ENCODE measurements at regions of chr11 and their contacts with region 1.

Region 1: DNA sequence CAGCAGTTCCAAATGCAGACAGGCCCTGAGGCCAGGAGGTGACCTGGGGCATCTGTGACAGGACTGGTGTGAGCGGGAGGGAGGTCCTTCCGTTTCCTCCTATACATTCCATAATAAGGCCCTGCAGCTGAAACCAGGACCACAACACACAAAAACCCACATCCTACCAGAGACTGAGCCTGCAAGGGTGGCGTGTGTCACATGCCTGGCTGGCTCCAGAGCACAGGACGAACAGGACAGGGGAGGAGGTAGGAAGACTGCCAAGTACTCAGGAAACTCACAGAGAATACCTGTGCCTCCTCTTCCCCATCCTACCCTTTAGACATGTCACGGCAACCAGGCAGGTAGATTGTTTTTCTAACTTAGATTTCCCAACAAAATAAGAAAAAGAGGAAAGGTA is 103.9 kb downstream of the ARL14EP start:
- DNase-seq: no peak

Region 2: GRCh38 chr11:30186748-30187147 is 240.0 kb before region 1 on chr11:
- intact Hi-C with region 1: no loop called
- DNase-seq: no peak

Region 3: DNA sequence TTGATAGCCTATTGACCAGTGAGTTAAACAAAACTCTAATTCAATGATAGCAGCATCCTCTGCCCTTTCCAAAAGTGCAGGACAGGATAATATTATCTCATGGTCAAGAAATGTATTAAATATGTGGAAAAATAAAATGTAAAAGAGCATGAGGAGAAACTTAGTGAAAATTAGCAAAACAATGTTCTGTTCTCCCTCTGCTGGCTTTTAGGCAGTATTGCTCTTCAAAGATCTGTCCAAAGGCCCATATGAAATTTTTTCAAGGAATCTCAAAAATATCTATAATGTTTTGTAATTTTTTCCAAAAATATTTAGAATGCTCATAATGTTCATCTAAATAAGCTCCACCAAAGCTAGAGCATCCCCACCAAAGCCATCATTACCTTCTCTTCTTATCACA is 112.2 kb before region 1 on chr11:
- intact Hi-C with region 1: no loop called
- DNase-seq: no peak

Region 4: DNA sequence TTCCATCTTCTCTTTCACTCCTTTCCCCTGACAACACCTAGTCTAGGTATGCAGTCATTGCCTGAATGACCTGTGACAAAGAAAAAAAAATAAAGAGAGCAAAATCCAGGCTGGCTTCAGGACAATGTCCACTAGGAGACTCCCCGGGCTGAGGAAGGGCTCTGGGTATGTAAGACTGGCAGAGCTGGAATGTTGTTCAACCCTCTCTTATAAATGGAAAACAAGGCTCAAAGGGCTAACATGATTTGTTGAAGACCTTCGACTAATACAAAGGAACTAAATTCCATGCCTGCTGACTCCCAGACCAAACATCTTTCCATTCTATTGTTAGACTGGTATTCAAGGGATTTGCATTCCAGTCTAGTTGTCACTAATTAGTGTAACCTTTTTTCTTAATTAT is 18.3 kb after region 1 on chr11:
- intact Hi-C with region 1: loop called in 1 of 2 experiments (anchors 1 kb)
- DNase-seq: no peak